Activated CD4-positive, alpha-beta T cell treated with anti-CD3 and anti-CD28 coated beads, Interleukin-2, amount 10 ng/mL, durations not matched to agents 7 days and 5 days (primary cell): ENCODE measurements at regions of chr15 and their contacts with region 1.

Region 1: GRCh38 chr15:67741308-67741707 is 84.0 kb upstream of the SKOR1 start:
- DNase-seq: no peak
- H3K4me3 Mint-ChIP-seq: no peak overlapping the region
- H3K27ac Mint-ChIP-seq: no peak overlapping the region
- H3K4me1 Mint-ChIP-seq: peaks cover 48% of the 10 kb centered on the region
- H3K27me3 Mint-ChIP-seq: no peaks in the 10 kb centered on the region

Region 2: GRCh38 chr15:67349634-67350033 is 391.7 kb before region 1 on chr15:
- CTCF ChIA-PET with region 1: no interaction called
- POLR2A ChIA-PET with region 1: interaction called, 14 read pairs
- DNase-seq: no peak
- H3K4me3 Mint-ChIP-seq: no peak overlapping the region
- H3K27ac Mint-ChIP-seq: no peak overlapping the region
- H3K4me1 Mint-ChIP-seq: no peaks in the 10 kb centered on the region
- H3K27me3 Mint-ChIP-seq: peaks cover 11% of the 10 kb centered on the region